K562 (cell line): ENCODE measurements at regions of chr1 and their contacts with region 1.

Region 1: DNA sequence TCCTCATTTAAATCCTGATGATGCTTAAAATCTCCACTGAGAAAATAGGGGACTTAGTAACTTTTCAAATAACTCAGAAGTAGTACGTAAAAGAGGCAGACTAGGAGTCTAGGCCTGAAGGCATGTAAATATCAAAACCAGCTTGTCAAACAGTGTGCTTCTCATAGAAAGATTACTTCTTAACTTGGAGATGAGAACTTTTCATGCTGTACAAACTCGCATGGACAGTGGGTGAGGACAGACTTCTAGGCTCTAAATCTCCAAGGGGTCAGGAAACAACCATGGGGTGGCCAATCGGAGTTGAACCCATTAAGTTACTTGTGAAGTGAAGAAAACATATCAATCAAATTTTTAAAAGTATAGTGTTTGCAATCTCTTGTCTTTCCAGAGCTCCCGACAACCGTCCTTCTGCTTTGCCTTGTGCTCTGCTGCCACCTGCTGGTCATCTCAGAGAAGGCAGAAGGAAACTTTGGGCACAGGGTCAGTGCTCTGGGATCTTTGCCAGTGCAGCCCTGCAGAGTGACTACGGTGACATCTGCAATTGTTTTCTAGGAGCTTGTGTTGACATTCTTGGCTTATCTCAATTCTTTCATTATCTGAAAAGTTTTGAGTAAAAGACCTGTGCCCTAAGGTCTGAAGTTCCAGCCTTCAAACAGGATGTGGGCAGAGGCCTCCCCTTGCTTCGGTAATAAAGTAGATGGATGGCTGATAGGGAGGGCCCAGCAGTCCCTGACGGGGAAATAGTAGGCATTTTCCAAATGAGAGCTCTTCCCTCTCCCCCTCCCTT is 105.1 kb upstream of the PDE4B start:
- DNase-seq: peak; percentile 82 to 92 (median 86)
- ATAC-seq: peak; percentile 95
- H3K4me3 ChIP-seq: no peak overlapping the region
- H3K27ac ChIP-seq: no peak overlapping the region
- H3K4me1 ChIP-seq: peaks cover 0 to 11% of the 10 kb centered on the region in 2 experiments; a peak in 2 of 5 replicates
- H3K27me3 ChIP-seq: no peaks in the 10 kb centered on the region
- CTCF ChIP-seq: peak; percentile 90 to 95 (median 92)
- EP300 ChIP-seq: peak; percentile 64
- POLR2A ChIP-seq: no peak
- RAD21 ChIP-seq: peak; percentile 99

Region 2: GRCh38 chr1:65059930-65060538 is 627.6 kb before region 1 on chr1:
- CTCF ChIA-PET with region 1: interaction called, 8 read pairs
- POLR2A ChIA-PET with region 1: interaction called, 3 read pairs
- in situ Hi-C with region 1: loop called (anchors 5 kb)
- intact Hi-C with region 1: loop called (anchors 2 kb)
- DNase-seq: peak; percentile 31 to 43 (median 37)
- ATAC-seq: 0 out of 3 replicates have a peak, but pooled peaks have one; percentile 30
- H3K4me3 ChIP-seq: no peak overlapping the region
- H3K27ac ChIP-seq: no peak overlapping the region
- H3K4me1 ChIP-seq: peaks cover 0 to 6% of the 10 kb centered on the region in 2 experiments; a peak in 2 of 5 replicates
- H3K27me3 ChIP-seq: no peaks in the 10 kb centered on the region
- CTCF ChIP-seq: peak; percentile 44 to 65 (median 50); a peak in 4 of 6 replicates
- EP300 ChIP-seq: no peak
- POLR2A ChIP-seq: no peak
- RAD21 ChIP-seq: peak; percentile 69 to 73

Region 3: DNA sequence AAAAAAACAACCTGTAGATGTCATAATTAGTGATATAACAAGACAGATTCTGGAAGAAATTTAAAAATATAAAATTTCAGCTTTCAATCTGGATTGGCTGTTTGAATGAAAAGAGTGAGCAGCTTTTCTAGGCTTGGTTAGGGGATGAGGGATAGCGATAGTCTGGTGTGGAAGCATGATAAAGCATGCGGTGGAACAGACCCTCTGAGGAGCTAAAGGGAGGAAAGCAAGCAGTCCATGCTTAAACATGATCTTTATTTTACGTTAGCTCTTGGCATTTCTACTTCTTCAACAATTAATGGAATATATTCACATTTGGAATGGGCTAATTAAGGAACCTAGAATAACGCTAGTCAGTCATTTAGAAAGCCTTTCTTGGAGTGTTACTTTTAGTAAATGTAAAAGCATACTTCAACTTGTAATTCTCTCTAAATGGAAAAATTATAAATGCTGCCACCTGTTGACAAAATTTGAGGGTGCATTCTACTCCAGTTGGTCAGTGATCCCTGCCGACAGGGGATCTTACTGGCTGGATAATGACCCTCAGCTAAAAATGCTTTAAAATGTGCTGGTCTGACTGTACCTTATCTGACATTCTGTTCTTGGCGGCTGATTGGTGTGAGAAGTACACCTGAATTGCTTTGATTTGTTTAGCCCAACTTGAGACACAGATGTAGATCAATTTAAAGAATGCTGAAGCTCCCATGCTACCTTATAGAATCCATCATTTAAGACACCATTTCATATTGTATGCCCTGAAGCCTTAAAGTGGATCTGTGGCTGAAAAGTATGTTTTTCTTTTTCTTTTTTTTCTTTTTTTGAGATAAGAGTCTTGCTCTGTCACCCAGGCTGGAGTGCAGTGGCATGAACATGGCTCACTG is 478.4 kb before region 1 on chr1:
- CTCF ChIA-PET with region 1: no interaction called
- POLR2A ChIA-PET with region 1: no interaction called
- in situ Hi-C with region 1: loop called (anchors 5 kb)
- intact Hi-C with region 1: no loop called
- DNase-seq: peak; percentile 72 to 78 (median 75)
- ATAC-seq: peak; percentile 92
- H3K4me3 ChIP-seq: no peak overlapping the region
- H3K27ac ChIP-seq: no peak overlapping the region; the same call in 2 of the 3 replicates
- H3K4me1 ChIP-seq: peaks cover 5 to 8% of the 10 kb centered on the region in 2 experiments; a peak in 3 of 5 replicates
- H3K27me3 ChIP-seq: no peaks in the 10 kb centered on the region
- CTCF ChIP-seq: peak; percentile 69 to 82 (median 77)
- EP300 ChIP-seq: no peak
- POLR2A ChIP-seq: no peak
- RAD21 ChIP-seq: peak; percentile 71 to 84

Region 4: DNA sequence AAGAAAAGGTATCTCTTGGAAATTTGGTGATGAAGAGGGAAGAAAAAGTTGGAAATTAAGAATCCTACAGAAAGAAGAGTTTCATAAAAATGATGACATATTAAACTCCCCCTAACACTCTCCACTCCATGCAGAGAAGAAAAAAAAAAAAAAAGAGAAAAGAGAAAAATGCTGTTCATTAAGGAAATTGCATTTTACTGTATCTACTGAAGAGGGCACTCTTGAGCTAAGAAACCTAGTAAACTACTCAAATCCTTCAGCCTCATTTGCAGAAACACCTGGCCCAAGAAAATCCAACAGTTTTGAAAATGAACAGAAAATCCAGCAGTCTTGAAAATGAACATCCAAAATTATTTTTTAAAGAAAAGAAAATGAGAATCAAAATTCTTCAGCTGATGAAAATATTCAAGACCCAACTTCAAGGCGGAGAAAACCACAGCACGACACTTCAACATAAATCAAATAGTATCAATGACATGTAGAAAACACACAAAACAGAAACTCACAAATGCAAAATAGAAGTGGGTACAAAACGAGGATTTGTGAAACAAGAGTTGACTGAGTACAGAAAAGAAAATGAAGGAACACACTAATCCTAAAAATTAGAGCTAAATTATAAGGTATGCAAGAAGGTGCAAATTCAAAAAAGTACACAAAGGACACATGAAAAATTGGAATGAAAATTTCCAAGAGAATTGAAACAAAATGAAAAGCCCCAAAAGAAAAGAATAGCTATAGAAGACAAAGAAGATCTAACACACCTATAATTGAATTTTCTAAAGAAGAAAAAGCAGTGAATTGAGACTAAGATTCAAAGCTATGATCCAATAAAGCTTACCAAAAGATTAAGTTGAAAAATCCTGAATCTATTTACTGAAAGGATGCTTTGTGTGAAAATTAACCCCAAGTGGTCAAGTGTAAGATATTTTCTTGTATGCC is 451.5 kb before region 1 on chr1:
- CTCF ChIA-PET with region 1: interaction called, 21 read pairs
- POLR2A ChIA-PET with region 1: no interaction called
- in situ Hi-C with region 1: no loop called
- intact Hi-C with region 1: loop called (anchors 2 kb)
- DNase-seq: peak in 3 of 4 experiments; percentile 24 to 81 (median 43)
- ATAC-seq: peak; percentile 5; the same call in 2 of the 3 replicates
- H3K4me3 ChIP-seq: no peak overlapping the region
- H3K27ac ChIP-seq: no peak overlapping the region
- H3K4me1 ChIP-seq: peaks cover 29 to 42% of the 10 kb centered on the region in 2 experiments; a peak in 4 of 5 replicates
- H3K27me3 ChIP-seq: no peaks in the 10 kb centered on the region
- CTCF ChIP-seq: peak; percentile 42 to 81 (median 70); a peak in 5 of 6 replicates
- EP300 ChIP-seq: no peak
- POLR2A ChIP-seq: no peak
- RAD21 ChIP-seq: peak; percentile 74 to 91